Activated T-helper 1 cell treated with anti-CD3 and anti-CD28 coated beads, Interleukin-12 subunit alpha, Interleukin-12 subunit beta, Interleukin-2, Interleukin-4 antibody, amounts not matched to agents 30 ng/mL and 10 ng/mL and 1 ng/mL, durations not matched to agents 14 hours and 24 hours and 36 hours (primary cell): ENCODE measurements at regions of chr14 and their contacts with region 1.

Region 1: DNA sequence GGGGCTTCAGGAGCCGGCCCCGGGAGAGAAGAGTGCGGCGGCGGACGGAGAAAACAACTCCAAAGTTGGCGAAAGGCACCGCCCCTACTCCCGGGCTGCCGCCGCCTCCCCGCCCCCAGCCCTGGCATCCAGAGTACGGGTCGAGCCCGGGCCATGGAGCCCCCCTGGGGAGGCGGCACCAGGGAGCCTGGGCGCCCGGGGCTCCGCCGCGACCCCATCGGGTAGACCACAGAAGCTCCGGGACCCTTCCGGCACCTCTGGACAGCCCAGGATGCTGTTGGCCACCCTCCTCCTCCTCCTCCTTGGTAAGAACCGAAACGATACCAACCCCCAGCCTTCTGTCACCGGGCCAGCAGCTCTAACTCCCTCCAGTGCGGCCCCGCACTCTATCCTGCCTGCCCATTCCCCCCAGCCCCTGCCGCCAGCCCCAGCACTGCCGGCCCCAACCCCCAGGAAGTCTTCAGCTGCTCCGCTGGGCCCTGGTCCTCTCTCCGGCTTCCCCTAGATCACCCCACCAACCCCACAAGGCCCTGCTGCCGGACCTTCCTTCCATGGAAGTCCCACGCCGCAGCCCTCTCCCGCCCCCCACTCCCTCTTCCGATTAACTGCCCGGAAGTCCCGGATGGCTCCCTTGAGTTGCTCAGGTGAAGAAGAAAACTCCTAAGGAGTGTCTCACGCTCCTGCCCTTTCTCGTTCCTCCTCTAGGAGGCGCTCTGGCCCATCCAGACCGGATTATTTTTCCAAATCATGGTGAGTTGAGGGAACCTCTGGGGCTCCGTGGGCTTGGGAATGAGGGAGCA is 693 bp downstream of the LRP10 start:
- DNase-seq: peak; percentile 63
- H3K4me3 Mint-ChIP-seq: peak overlapping the region; percentile 91
- H3K27ac Mint-ChIP-seq: peak overlapping the region; percentile 80
- H3K4me1 Mint-ChIP-seq: peaks cover 22% of the 10 kb centered on the region
- H3K27me3 Mint-ChIP-seq: no peaks in the 10 kb centered on the region

Region 2: GRCh38 chr14:22589096-22589839 is 283.0 kb before region 1 on chr14 and contains the start of gene DAD1:
- intact Hi-C with region 1: loop called (anchors 1 kb)
- DNase-seq: peak; percentile 100
- H3K4me3 Mint-ChIP-seq: peak within 1 kb of the TSS; percentile 91
- H3K27ac Mint-ChIP-seq: peak within 1 kb of the TSS; percentile 96
- H3K4me1 Mint-ChIP-seq: peaks cover 55% of the 10 kb centered on the region
- H3K27me3 Mint-ChIP-seq: no peaks in the 10 kb centered on the region
- total RNA-seq, gene DAD1: 228 and 229 TPM in 2 replicates

Region 3: GRCh38 chr14:22766456-22767322 is 105.5 kb before region 1 on chr14 and contains the start of gene OXA1L:
- intact Hi-C with region 1: loop called (anchors 1 kb)
- DNase-seq: peak; percentile 94
- H3K4me3 Mint-ChIP-seq: peak within 1 kb of the TSS; percentile 94
- H3K27ac Mint-ChIP-seq: peak within 1 kb of the TSS; percentile 96
- H3K4me1 Mint-ChIP-seq: peaks cover 22% of the 10 kb centered on the region
- H3K27me3 Mint-ChIP-seq: no peaks in the 10 kb centered on the region
- total RNA-seq, gene OXA1L: 125 and 127 TPM in 2 replicates

Region 4: GRCh38 chr14:22852599-22852939 is 19.7 kb before region 1 on chr14:
- intact Hi-C with region 1: no loop called
- DNase-seq: no peak
- H3K4me3 Mint-ChIP-seq: peak overlapping the region; percentile 81
- H3K27ac Mint-ChIP-seq: peak overlapping the region; percentile 82
- H3K4me1 Mint-ChIP-seq: peaks cover 38% of the 10 kb centered on the region
- H3K27me3 Mint-ChIP-seq: peaks cover 13% of the 10 kb centered on the region

Region 5: GRCh38 chr14:22886500-22887259 is 14.4 kb after region 1 on chr14:
- intact Hi-C with region 1: loop called (anchors 1 kb)
- DNase-seq: peak; percentile 62
- H3K4me3 Mint-ChIP-seq: peak overlapping the region; percentile 87
- H3K27ac Mint-ChIP-seq: peak overlapping the region; percentile 88
- H3K4me1 Mint-ChIP-seq: peaks cover 31% of the 10 kb centered on the region
- H3K27me3 Mint-ChIP-seq: peaks cover 8% of the 10 kb centered on the region

Region 6: DNA sequence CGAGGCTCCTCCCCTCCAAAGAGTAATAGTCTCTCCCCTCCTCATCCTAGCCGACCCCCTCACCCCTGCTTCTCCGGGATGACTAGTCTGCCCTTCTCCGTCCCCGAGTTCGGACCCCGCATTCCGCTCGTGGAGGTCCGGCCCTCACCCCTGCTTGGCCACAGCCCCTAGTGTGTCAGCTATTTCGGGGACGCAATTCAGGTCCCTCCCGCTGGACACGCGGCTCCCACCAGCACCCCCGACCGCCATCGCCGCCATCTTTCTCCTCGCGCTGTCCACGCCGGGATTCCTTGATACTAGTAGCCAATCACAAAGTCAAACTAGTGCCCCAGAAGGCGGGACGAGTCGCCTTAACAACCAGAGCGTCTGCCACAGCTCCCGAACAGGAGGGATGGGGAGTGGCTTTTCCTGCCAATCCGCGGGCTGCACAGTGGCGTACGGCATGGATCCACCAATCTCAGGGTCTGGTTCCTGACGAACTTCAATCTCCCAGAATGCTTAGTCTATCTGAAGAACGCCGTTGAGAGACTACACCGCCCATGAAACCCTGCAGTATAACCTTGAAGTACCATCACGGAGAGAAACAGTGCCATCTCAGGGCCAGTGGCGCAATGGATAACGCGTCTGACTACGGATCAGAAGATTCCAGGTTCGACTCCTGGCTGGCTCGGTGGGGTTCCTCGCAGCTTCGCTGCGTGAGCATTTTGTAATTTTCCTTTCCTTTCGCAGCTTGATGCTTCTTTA is 57.0 kb after region 1 on chr14 and contains the start of gene PRMT5:
- intact Hi-C with region 1: loop called (anchors 1 kb)
- DNase-seq: peak; percentile 95
- H3K4me3 Mint-ChIP-seq: no peak within 1 kb of the TSS
- H3K27ac Mint-ChIP-seq: no peak within 1 kb of the TSS
- H3K4me1 Mint-ChIP-seq: peaks cover 32% of the 10 kb centered on the region
- H3K27me3 Mint-ChIP-seq: no peaks in the 10 kb centered on the region
- total RNA-seq, gene PRMT5: 174 and 180 TPM in 2 replicates

Region 7: GRCh38 chr14:24411443-24412389 is 1539.5 kb after region 1 on chr14:
- intact Hi-C with region 1: no loop called
- DNase-seq: no peak
- H3K4me3 Mint-ChIP-seq: no peak overlapping the region
- H3K27ac Mint-ChIP-seq: no peak overlapping the region
- H3K4me1 Mint-ChIP-seq: no peaks in the 10 kb centered on the region
- H3K27me3 Mint-ChIP-seq: no peaks in the 10 kb centered on the region